ENCODE measurements at regions of chr18 and their contacts with region 1.

Region 1: DNA sequence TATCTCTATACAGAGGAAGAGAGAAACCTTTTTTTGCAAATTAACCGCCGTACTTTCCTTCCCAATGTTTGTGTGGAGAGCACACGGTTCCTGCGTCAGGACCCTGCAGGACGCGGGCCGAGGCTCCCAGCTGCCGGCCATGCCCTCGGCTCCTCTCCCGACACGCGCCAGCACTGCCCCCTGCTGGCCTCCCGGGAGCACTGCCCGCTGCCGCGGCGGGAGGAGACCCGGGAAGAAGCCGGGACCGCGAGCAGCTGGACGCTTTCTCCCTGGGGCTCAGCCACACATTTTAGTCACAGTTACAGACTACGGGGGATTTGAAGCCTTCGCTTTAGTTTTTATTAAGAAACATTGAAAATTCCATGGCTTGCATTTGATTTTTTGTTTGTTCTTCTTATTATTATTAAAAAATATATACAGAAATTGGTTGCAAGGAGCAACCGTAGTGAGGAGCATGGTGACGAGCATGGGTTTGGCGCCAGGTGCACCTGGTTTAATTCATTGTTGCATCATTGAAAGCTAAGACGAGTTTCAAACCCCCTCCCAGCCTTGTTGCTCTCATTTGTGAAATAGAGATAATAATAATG is 401.2 kb downstream of the GALR1 start:
- DNase-seq: peak; percentile 73
- H3K4me3 ChIP-seq: no peak overlapping the region
- H3K27ac ChIP-seq: no peak overlapping the region
- H3K4me1 ChIP-seq: peaks cover 0 to 6% (median 2%) of the 10 kb centered on the region in 4 donors
- H3K27me3 ChIP-seq: peaks cover 7% of the 10 kb centered on the region
- CTCF ChIP-seq: peak; percentile 79 to 94 (median 85)
- EP300 ChIP-seq: no peak
- POLR2A ChIP-seq: no peak

Region 2: DNA sequence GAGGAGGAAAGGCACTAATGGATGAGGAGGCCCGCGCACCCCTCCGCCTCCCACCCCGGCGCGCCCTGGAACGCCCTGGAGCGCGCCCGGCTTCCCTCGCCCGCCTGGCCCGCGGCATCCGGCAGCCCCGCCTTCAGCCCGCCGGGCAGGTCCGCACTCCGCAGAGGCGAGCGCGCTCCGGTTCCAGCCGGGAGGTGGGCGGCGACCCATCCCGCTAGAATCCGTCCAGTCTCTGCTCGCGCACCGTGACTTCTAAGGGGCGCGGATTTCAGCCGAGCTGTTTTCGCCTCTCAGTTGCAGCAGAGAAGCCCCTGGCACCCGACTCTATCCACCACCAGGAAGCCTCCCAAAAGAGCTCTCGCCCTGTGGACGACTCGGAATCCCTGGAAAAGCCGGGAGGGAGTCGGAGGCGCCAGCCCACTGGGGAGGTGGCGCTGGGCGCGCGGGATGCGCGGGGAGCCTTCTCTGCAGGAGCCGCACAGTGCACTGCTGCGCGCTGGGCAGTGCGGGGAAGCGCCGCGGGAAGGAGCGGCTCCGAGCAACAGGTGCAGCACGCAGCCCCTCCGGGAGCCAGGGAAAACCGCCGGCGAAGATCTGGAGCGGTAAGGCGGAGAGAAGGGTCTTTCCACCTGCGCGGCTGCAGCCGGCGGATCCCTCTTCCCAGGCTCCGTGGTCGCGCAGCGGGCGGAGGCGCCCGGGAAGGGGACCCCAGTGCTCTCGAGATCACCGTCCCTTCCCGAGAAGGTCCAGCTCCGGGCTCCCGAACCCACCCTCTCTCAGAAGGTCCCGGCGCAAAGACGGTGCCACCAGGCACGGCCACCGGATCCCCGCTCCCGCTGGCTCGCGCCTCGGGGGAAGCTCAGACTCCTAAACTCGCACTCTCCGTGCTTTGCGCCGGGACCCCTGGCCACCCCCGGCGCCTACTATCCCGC is 401.1 kb before region 1 on chr18 and contains the start of gene GALR1:
- in situ Hi-C with region 1: loop called in 1 of 4 experiments (anchors 25 kb)
- intact Hi-C with region 1: no loop called
- DNase-seq: no peak
- H3K4me3 ChIP-seq: peak within 1 kb of the TSS in 3 of 4 donors; percentile 14 to 36 (median 18)
- H3K27ac ChIP-seq: no peak within 1 kb of the TSS
- H3K4me1 ChIP-seq: peaks cover 0 to 16% (median 13%) of the 10 kb centered on the region in 4 donors
- H3K27me3 ChIP-seq: peaks cover 69% of the 10 kb centered on the region
- CTCF ChIP-seq: no peak
- EP300 ChIP-seq: no peak
- POLR2A ChIP-seq: no peak
- total RNA-seq, gene GALR1: under 0.01 to 1.9 (median 0.07) TPM

Measured in transverse colon (tissue), 4 donors.